BJ (cell line): ENCODE measurements at regions of chr6 and their contacts with region 1.

Region 1: GRCh38 chr6:138287144-138287955 is 69.1 kb upstream of the PBOV1 start:
- DNase-seq: no peak
- H3K4me3 ChIP-seq: no peak overlapping the region
- H3K27me3 ChIP-seq: no peaks in the 10 kb centered on the region
- CTCF ChIP-seq: peak; percentile 45

Region 2: GRCh38 chr6:138275976-138276375 is 11.4 kb before region 1 on chr6:
- CTCF ChIA-PET with region 1: interaction called, 10 read pairs
- POLR2A ChIA-PET with region 1: interaction called, 3 read pairs
- DNase-seq: no peak
- H3K4me3 ChIP-seq: no peak overlapping the region
- H3K27me3 ChIP-seq: no peaks in the 10 kb centered on the region
- CTCF ChIP-seq: no peak

Region 3: DNA sequence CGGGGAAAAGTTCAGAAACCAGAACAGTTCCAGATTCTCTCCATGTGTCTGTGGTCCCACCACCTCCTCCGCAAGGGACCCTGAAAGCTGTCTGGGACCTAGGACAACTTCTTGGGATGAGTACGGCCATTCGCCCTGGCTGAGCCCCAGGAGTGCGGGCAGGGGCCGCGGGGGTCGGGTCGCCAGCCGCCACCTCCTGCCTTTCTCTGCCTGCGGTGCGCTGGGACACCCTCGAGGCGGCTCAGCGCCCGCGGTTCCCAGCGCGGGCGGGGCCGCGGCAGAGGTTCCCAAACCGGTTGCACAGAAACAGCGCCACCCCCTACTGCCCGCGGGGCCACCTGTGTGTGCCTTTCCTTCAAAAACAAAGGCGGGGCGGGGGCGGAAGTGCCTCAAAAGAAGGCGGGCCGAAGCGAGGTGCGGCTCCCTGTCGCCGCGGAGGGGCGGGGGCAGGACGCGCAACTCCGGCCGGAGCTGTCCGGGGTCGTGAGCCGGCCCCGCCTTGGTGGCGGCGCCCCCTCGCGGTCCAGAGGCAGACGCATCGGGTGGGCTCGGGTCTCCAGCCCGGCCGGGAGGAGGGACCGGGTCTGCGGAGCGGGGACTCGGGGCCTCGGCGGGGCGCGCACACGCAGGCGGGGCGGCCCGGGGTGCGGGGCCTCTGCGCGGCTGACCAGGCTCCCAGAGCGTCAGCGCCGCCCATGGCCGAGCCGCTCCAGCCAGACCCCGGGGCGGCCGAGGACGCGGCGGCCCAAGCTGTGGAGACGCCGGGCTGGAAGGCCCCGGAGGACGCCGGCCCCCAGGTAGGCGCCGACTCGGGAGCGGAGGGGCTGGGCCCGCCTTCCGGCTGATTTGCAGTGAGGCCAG is 116.7 kb after region 1 on chr6 and contains the start of gene HEBP2:
- CTCF ChIA-PET with region 1: no interaction called
- POLR2A ChIA-PET with region 1: no interaction called
- DNase-seq: no peak
- H3K4me3 ChIP-seq: peak within 1 kb of the TSS; percentile 50
- H3K27me3 ChIP-seq: no peaks in the 10 kb centered on the region
- CTCF ChIP-seq: peak; percentile 34; the same call in 1 of the 2 replicates
- polyA plus RNA-seq, gene HEBP2: 14.5 and 23.6 TPM in 2 replicates